Activated T-helper 1 cell treated with anti-CD3 and anti-CD28 coated beads, Interleukin-12 subunit alpha, Interleukin-12 subunit beta, Interleukin-2, Interleukin-4 antibody, amounts not matched to agents 30 ng/mL and 10 ng/mL and 1 ng/mL, durations not matched to agents 14 hours and 24 hours and 36 hours (primary cell): ENCODE measurements at regions of chr14 and their contacts with region 1.

Region 1: DNA sequence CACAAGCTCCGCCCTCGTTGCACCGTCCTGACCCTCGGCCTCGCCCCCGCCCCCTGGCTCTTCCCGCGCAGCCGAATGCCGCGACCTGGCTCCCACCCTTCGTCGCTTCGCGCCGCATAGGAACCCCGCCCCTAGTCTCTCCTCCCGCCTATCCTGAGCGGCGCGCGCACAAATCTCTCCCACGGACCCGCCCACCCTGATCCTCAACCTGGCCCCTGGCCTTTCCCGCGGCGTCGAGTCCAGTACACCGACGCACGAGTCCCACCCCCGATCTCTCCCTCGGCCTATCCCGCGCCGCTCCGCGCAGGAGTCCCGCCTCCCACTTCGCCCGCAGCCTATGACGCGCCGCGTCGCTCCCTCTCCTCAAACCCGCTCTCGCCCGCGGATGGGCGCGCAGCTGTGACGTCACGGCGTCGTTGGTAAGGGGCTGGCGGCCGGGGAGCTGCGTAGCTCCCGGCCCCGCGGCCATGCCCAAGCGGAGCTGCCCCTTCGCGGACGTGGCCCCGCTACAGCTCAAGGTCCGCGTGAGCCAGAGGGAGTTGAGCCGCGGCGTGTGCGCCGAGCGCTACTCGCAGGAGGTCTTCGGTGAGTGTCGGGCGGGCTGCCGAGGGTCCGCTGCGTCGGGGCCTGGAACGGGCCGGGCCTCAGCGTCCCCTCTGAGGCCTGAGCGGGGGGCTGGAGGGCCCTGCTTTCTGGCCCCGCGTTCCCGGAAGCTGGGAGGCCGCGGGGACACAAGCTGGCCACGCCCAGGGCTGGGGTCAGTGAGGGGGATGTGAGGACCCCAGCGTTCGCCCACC is at the start of gene SIVA1:
- DNase-seq: peak; percentile 100
- H3K4me3 Mint-ChIP-seq: peak within 1 kb of the TSS; percentile 92
- H3K27ac Mint-ChIP-seq: peak within 1 kb of the TSS; percentile 90
- H3K4me1 Mint-ChIP-seq: peaks cover 21% of the 10 kb centered on the region
- H3K27me3 Mint-ChIP-seq: peaks cover 2% of the 10 kb centered on the region
- total RNA-seq, gene SIVA1: 111 and 113 TPM in 2 replicates

Region 2: GRCh38 chr14:104677512-104678332 is 75.2 kb before region 1 on chr14:
- intact Hi-C with region 1: loop called (anchors 1 kb)
- DNase-seq: peak; percentile 69
- H3K4me3 Mint-ChIP-seq: peak overlapping the region; percentile 73
- H3K27ac Mint-ChIP-seq: peak overlapping the region; percentile 90
- H3K4me1 Mint-ChIP-seq: peaks cover 22% of the 10 kb centered on the region
- H3K27me3 Mint-ChIP-seq: peaks cover 5% of the 10 kb centered on the region

Region 3: DNA sequence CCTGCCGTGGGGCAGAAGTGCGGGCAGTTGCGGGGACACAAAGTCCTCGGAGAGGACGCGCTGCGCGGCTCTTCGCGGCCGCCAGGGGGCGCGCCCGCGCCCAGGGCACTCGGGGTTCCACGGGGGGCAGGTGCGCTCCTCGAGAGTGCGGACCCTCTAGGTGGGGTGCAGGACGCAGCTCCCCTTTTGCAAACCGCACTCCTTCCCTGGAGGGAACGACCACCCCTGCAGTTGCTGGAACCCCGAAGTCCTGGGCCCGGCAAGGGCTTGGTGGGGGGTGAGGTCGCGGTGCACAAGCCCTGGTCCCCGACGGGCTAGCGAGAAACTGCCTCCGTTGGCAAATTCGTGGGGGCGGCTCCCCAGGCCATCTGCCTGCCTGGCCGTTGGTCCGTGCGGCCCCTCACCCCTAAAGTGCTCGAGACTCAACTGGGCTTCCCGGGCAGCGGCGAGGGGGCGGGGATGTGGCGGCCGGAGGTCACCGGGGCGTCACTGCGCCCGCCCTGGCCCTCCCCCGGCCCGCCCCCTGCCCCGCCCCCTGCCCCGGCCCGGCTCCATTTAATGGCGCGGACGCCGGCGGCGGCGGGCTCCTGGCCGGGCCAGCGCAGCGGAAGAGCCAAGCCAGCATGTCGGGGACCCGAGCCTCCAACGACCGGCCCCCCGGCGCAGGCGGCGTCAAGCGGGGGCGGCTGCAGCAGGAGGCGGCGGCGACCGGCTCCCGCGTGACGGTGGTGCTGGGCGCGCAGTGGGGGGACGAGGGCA is 29.1 kb before region 1 on chr14 and contains the start of gene ADSS1:
- intact Hi-C with region 1: loop called (anchors 1 kb)
- DNase-seq: peak; percentile 50
- H3K4me3 Mint-ChIP-seq: peak within 1 kb of the TSS; percentile 59
- H3K27ac Mint-ChIP-seq: no peak within 1 kb of the TSS
- H3K4me1 Mint-ChIP-seq: no peaks in the 10 kb centered on the region
- H3K27me3 Mint-ChIP-seq: no peaks in the 10 kb centered on the region
- total RNA-seq, gene ADSS1: 1.1 and 1.2 TPM in 2 replicates

Region 4: GRCh38 chr14:104800015-104800770 is 47.3 kb after region 1 on chr14:
- intact Hi-C with region 1: loop called (anchors 1 kb)
- DNase-seq: peak; percentile 77
- H3K4me3 Mint-ChIP-seq: peak overlapping the region; percentile 61
- H3K27ac Mint-ChIP-seq: peak overlapping the region; percentile 66
- H3K4me1 Mint-ChIP-seq: peaks cover 16% of the 10 kb centered on the region
- H3K27me3 Mint-ChIP-seq: peaks cover 10% of the 10 kb centered on the region

Region 5: GRCh38 chr14:104985675-104986525 is 233.0 kb after region 1 on chr14 and contains the start of gene CLBA1:
- intact Hi-C with region 1: loop called (anchors 2 kb)
- DNase-seq: peak; percentile 87
- H3K4me3 Mint-ChIP-seq: peak within 1 kb of the TSS; percentile 71
- H3K27ac Mint-ChIP-seq: peak within 1 kb of the TSS; percentile 64
- H3K4me1 Mint-ChIP-seq: no peaks in the 10 kb centered on the region
- H3K27me3 Mint-ChIP-seq: peaks cover 7% of the 10 kb centered on the region
- total RNA-seq, gene CLBA1: 3.1 TPM in 2 replicates

Region 6: GRCh38 chr14:105300792-105301533 is 548.0 kb after region 1 on chr14 and contains the start of gene BRF1:
- intact Hi-C with region 1: loop called (anchors 2 kb)
- DNase-seq: peak; percentile 97
- H3K4me3 Mint-ChIP-seq: peak within 1 kb of the TSS; percentile 91
- H3K27ac Mint-ChIP-seq: peak within 1 kb of the TSS; percentile 91
- H3K4me1 Mint-ChIP-seq: peaks cover 36% of the 10 kb centered on the region
- H3K27me3 Mint-ChIP-seq: peaks cover 4% of the 10 kb centered on the region
- total RNA-seq, gene BRF1: 46.1 and 46.9 TPM in 2 replicates